Prostate gland (tissue), 2 donors: ENCODE measurements at regions of chr10 and their contacts with region 1.

Region 1: DNA sequence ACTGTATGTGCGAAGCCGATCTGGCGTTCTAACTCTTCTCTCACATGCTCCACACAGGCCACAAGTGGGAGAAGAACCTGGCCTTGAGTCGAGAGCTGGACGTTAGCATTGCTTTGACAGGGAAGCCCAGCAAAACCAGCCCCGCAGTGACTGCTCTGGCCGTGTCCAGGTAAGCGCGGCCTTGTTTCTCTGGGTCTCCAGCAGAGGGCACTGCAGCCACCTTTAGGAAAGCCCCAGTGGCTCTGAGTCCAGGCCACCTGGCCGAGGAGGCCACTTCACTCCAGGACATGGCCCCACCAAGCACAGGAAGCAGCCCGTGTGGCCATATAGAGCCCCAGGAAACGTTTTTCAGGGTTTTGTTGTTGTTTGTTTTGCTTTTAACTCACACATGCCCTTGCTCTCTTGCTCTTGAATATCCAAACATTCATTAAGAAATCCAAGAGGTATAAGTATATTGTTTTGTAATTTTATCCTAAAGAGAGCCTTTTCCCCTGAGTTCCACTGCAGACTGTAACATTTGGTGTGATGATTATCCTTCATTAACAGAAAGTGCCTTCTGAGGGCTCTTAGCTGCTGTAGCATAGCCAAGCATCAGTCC is 41.8 kb upstream of the LRRC18 start:
- DNase-seq: peak; percentile 23
- H3K4me3 ChIP-seq: no peak overlapping the region
- H3K27ac ChIP-seq: no peak overlapping the region
- H3K4me1 ChIP-seq: no peaks in the 10 kb centered on the region
- H3K27me3 ChIP-seq: no peaks in the 10 kb centered on the region
- CTCF ChIP-seq: peak; percentile 67 to 77 (median 72)
- POLR2A ChIP-seq: no peak

Region 2: GRCh38 chr10:49109669-49110340 is 128.4 kb after region 1 on chr10:
- intact Hi-C with region 1: loop called (anchors 5 kb)
- DNase-seq: no peak
- H3K4me3 ChIP-seq: no peak overlapping the region
- H3K27ac ChIP-seq: no peak overlapping the region
- H3K4me1 ChIP-seq: peaks cover 8% of the 10 kb centered on the region
- H3K27me3 ChIP-seq: no peaks in the 10 kb centered on the region
- CTCF ChIP-seq: no peak
- POLR2A ChIP-seq: no peak

Region 3: DNA sequence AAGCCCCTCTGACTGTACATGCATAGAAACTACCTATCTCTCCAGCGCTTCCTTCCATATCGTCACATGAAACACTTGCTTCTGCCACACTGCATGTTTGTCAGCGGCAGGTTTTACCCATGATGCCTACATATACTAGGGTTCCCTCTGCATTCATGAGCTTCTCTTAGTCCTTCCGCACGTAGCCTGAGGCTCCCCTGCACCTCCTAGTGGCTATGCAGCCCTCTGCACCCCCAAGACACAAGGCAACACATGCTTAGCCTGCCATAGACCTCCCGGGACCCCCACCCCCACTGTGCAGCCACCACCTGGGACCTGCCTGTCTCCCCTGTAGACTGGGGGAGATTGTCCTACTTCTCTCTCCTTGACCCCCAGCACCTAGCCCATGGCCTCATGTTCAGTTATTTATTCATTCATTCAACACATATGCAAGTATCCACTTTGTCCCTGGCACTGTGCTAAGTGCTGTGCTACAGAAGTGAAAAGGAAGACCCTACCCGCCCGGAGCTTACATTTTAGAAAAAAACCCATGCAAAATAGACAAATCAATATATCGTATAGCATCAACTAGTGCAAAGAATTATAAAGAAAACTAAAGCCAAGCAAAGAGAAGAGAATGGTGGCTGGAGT is 183.3 kb after region 1 on chr10:
- intact Hi-C with region 1: loop called (anchors 2 kb)
- DNase-seq: no peak
- H3K4me3 ChIP-seq: no peak overlapping the region
- H3K27ac ChIP-seq: no peak overlapping the region
- H3K4me1 ChIP-seq: no peaks in the 10 kb centered on the region
- H3K27me3 ChIP-seq: no peaks in the 10 kb centered on the region
- CTCF ChIP-seq: peak in 3 of 4 experiments; percentile 21 to 60 (median 52)
- POLR2A ChIP-seq: no peak